ENCODE measurements at regions of chr12 and their contacts with region 1.

Region 1: DNA sequence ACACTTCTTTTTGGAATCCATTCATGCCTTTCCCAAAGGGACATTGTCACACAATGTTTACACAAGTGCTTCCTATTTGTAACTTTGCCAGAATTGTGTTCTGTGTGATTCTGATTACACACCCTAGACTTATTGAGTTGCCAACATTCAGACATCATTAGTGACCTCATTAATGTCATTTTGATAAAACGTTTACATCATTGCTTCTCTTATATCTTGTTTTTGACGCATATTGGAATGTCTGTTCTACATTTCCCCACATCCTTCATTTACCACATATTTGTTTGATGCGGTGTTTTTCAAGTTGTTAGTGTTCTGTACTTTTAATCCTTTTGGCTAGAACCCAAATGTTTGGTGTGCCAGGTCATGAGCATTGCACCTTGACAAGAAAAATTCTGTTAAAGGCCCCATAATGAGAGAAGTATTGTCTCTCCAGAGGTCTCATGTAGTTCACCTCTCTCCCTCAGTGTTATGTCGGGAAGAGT is 305.5 kb downstream of the AEBP2 start:
- DNase-seq: no peak
- ATAC-seq: no peak
- H3K4me3 ChIP-seq: no peak overlapping the region
- H3K27ac ChIP-seq: no peak overlapping the region
- H3K4me1 ChIP-seq: no peaks in the 10 kb centered on the region
- H3K27me3 ChIP-seq: no peaks in the 10 kb centered on the region
- CTCF ChIP-seq: no peak

Region 2: DNA sequence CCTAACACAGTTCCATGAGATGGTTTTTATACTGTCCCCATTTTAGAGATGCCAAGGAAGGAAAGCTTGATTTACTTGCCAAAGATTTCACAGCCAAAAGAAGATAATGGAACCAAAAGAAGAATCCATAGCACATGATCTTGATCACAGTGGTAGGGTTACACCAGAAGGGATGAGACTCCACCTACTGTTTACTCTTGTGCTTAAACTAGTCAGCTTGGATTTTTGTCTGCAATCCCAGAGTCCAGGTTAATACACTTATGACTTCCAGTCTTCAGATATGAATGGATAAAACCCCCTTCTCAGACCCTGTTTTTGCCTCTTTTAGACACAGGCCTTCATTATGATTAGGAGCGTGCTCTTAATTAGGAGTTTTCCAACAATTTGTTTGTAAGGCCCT is 148.7 kb after region 1 on chr12:
- intact Hi-C with region 1: loop called in 1 of 2 experiments (anchors 10 kb)
- DNase-seq: no peak
- ATAC-seq: no peak
- H3K4me3 ChIP-seq: no peak overlapping the region
- H3K27ac ChIP-seq: no peak overlapping the region
- H3K4me1 ChIP-seq: no peaks in the 10 kb centered on the region
- H3K27me3 ChIP-seq: no peaks in the 10 kb centered on the region
- CTCF ChIP-seq: no peak

Region 3: DNA sequence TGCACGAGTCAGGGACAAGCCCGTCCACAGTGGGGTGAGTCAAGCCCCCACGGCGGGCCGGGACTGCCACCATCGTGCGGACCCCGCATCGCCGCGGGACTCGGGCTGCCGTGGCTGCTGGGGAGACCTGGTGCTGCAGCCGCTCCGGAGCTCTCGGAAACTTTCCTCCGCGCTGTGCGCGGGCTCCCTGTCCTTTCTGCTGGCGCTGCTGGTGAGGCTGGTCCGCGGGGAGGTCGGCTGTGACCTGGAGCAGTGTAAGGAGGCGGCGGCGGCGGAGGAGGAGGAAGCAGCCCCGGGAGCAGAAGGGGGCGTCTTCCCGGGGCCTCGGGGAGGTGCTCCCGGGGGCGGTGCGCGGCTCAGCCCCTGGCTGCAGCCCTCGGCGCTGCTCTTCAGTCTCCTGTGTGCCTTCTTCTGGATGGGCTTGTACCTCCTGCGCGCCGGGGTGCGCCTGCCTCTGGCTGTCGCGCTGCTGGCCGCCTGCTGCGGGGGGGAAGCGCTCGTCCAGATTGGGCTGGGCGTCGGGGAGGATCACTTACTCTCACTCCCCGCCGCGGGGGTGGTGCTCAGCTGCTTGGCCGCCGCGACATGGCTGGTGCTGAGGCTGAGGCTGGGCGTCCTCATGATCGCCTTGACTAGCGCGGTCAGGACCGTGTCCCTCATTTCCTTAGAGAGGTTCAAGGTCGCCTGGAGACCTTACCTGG is 624.7 kb after region 1 on chr12:
- intact Hi-C with region 1: loop called (anchors 5 to 10 kb)
- DNase-seq: peak; percentile 63 to 78
- ATAC-seq: peak; percentile 50 to 76 (median 72)
- H3K4me3 ChIP-seq: peak overlapping the region; percentile 71
- H3K27ac ChIP-seq: peak overlapping the region; percentile 38
- H3K4me1 ChIP-seq: no peaks in the 10 kb centered on the region
- H3K27me3 ChIP-seq: peaks cover 0 to 12% (median 0%) of the 10 kb centered on the region in 3 donors
- CTCF ChIP-seq: peak; percentile 8

Region 4: GRCh38 chr12:20596061-20596460 is 851.3 kb after region 1 on chr12:
- intact Hi-C with region 1: loop called in 1 of 2 experiments (anchors 10 kb)
- DNase-seq: no peak
- ATAC-seq: no peak
- H3K4me3 ChIP-seq: no peak overlapping the region
- H3K27ac ChIP-seq: no peak overlapping the region
- H3K4me1 ChIP-seq: no peaks in the 10 kb centered on the region
- H3K27me3 ChIP-seq: no peaks in the 10 kb centered on the region
- CTCF ChIP-seq: no peak